HCT116 (cell line): ENCODE measurements at regions of chr11 and their contacts with region 1.

Region 1: GRCh38 chr11:41461057-41461681 is 1.7 kb upstream of the LRRC4C start:
- DNase-seq: peak; percentile 1
- ATAC-seq: no peak
- H3K4me3 ChIP-seq: no peak overlapping the region
- H3K27ac ChIP-seq: no peak overlapping the region
- H3K4me1 ChIP-seq: no peaks in the 10 kb centered on the region
- H3K27me3 ChIP-seq: no peaks in the 10 kb centered on the region
- CTCF ChIP-seq: peak in 2 of 3 experiments; percentile 50 to 61; a peak in 4 of 6 replicates
- POLR2A ChIP-seq: no peak
- RAD21 ChIP-seq: no peak; the same call in 1 of the 2 replicates

Region 2: GRCh38 chr11:42524534-42525227 is 1063.5 kb after region 1 on chr11:
- CTCF ChIA-PET with region 1: no interaction called
- POLR2A ChIA-PET with region 1: no interaction called
- RAD21 ChIA-PET with region 1: no interaction called
- intact Hi-C with region 1: loop called (anchors 2 kb)
- DNase-seq: no peak
- ATAC-seq: no peak
- H3K4me3 ChIP-seq: no peak overlapping the region
- H3K27ac ChIP-seq: no peak overlapping the region
- H3K4me1 ChIP-seq: no peaks in the 10 kb centered on the region
- H3K27me3 ChIP-seq: no peaks in the 10 kb centered on the region
- CTCF ChIP-seq: peak in 2 of 3 experiments; percentile 61 to 62; a peak in 4 of 6 replicates
- POLR2A ChIP-seq: no peak
- RAD21 ChIP-seq: peak; percentile 31

Region 3: DNA sequence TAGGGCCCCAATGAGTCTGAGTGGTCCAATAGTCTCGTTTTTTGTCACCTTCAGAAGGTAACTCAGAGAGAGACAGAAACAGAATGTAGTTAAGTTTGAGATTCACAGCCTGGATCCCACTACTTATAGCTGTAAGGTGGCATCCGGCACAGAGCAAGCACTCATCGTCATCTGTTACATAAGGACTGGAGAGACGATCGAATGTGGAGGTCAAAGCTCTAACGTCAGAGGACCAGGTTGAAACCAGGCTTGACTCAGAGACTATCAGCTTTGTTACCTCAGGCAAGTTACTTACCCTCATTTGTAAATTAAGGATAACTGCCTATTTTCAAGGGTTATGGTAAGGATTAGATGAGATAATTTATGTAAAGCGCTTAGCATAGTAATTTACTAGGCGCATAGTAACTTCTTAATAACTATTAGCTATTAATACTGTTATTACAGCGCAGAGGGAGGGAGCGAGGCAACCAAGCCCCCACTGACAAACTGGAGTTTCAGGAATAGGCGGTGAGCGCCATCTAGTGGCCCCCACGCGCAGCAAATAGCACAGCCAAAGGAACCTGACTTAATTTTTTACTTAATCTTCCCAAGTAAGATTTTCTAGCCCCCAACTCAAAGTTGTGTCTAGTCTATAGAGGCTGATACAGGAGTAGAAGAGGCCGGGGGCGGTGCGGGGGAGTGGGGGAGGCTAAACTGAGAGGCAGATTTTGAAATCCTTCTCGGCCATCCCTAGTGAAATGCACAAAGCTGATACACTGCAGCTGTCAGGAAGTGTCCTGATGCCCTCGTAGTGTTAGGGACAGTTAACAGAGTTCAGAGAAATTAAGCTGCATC is 1821.7 kb after region 1 on chr11:
- CTCF ChIA-PET with region 1: no interaction called
- POLR2A ChIA-PET with region 1: no interaction called
- RAD21 ChIA-PET with region 1: no interaction called
- intact Hi-C with region 1: loop called (anchors 2 kb)
- DNase-seq: peak; percentile 22
- ATAC-seq: peak; percentile 73
- H3K4me3 ChIP-seq: no peak overlapping the region
- H3K27ac ChIP-seq: no peak overlapping the region
- H3K4me1 ChIP-seq: no peaks in the 10 kb centered on the region
- H3K27me3 ChIP-seq: peaks cover 3% of the 10 kb centered on the region; the same call in 1 of the 2 replicates
- CTCF ChIP-seq: peak; percentile 7 to 97 (median 85); a peak in 4 of 6 replicates
- POLR2A ChIP-seq: no peak
- RAD21 ChIP-seq: peak; percentile 63